K562 (cell line): ENCODE measurements at regions of chr2 and their contacts with region 1.

Region 1: GRCh38 chr2:170815746-170816503 is 762 bp upstream of the GAD1 start:
- DNase-seq: peak; percentile 85 to 88 (median 87)
- ATAC-seq: peak; percentile 87
- H3K4me3 ChIP-seq: peak overlapping the region; percentile 39
- H3K27ac ChIP-seq: no peak overlapping the region
- H3K4me1 ChIP-seq: peaks cover 6 to 48% of the 10 kb centered on the region in 2 experiments
- H3K27me3 ChIP-seq: peaks cover 0 to 7% of the 10 kb centered on the region in 2 experiments; a peak in 1 of 5 replicates
- CTCF ChIP-seq: peak; percentile 94 to 98 (median 95)
- EP300 ChIP-seq: no peak
- POLR2A ChIP-seq: no peak
- RAD21 ChIP-seq: peak; percentile 96

Region 2: GRCh38 chr2:169452080-169452479 is 1363.8 kb before region 1 on chr2:
- CTCF ChIA-PET with region 1: interaction called, 4 read pairs
- POLR2A ChIA-PET with region 1: no interaction called
- in situ Hi-C with region 1: no loop called
- intact Hi-C with region 1: loop called (anchors 2 kb)
- DNase-seq: peak; percentile 51 to 78 (median 58)
- ATAC-seq: peak; percentile 97
- H3K4me3 ChIP-seq: no peak overlapping the region
- H3K27ac ChIP-seq: no peak overlapping the region
- H3K4me1 ChIP-seq: no peaks in the 10 kb centered on the region; a peak in 1 of 5 replicates
- H3K27me3 ChIP-seq: no peaks in the 10 kb centered on the region
- CTCF ChIP-seq: peak; percentile 34 to 76 (median 49); a peak in 4 of 6 replicates
- EP300 ChIP-seq: no peak
- POLR2A ChIP-seq: no peak
- RAD21 ChIP-seq: peak; percentile 57 to 71

Region 3: DNA sequence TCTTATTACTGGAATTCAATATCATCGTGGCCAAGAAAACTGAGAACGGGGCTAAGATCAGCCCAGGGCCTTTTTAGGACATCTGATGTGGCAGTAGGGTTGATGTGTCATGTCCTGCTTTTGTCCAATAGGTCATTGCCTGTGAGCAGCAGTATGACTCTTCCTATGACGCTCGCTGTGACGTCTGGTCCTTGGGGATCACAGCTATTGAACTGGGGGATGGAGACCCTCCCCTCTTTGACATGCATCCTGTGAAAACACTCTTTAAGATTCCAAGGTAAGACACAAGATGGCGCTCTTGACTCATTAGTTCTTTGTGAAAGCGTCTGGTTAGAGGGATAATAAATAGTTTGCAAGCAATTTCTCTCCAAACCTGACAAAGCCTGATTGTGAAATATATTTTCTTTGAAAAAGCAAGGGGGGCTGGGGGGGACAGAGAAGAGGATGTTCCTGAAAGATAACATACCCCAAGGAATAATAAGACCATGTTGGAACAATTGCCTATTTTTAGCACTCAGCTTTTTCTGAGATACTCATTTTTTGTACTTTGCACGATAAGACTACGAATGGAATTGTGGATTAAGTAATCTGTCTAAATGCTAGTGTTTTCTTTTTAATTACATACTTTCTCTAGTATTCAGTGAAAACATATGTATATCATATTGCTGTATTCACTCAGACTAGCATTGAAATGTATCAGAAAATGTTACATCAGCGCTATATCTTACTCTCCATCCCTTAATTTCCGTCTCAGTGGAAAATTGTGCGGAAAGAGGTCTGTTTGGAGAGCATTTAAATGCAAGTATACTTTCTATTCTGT is 579.9 kb before region 1 on chr2:
- CTCF ChIA-PET with region 1: interaction called, 41 read pairs
- POLR2A ChIA-PET with region 1: interaction called, 3 read pairs
- in situ Hi-C with region 1: loop called (anchors 5 kb)
- intact Hi-C with region 1: loop called (anchors 1 kb)
- DNase-seq: peak; percentile 83 to 89 (median 84)
- ATAC-seq: peak; percentile 89
- H3K4me3 ChIP-seq: no peak overlapping the region
- H3K27ac ChIP-seq: no peak overlapping the region; the same call in 1 of the 3 replicates
- H3K4me1 ChIP-seq: peaks cover 0 to 57% of the 10 kb centered on the region in 2 experiments; a peak in 3 of 5 replicates
- H3K27me3 ChIP-seq: no peaks in the 10 kb centered on the region
- CTCF ChIP-seq: peak; percentile 69 to 92 (median 86)
- EP300 ChIP-seq: peak; percentile 94
- POLR2A ChIP-seq: no peak
- RAD21 ChIP-seq: peak; percentile 99

Region 4: GRCh38 chr2:170361090-170361936 is 454.6 kb before region 1 on chr2:
- CTCF ChIA-PET with region 1: interaction called, 17 read pairs
- POLR2A ChIA-PET with region 1: interaction called, 4 read pairs
- in situ Hi-C with region 1: loop called (anchors 10 kb)
- intact Hi-C with region 1: no loop called
- DNase-seq: peak; percentile 57 to 90 (median 64)
- ATAC-seq: peak; percentile 85
- H3K4me3 ChIP-seq: 0 out of 2 replicates have a peak overlapping the region, but pooled peaks have one; percentile 0
- H3K27ac ChIP-seq: peak overlapping the region; percentile 75
- H3K4me1 ChIP-seq: peaks cover 0 to 56% of the 10 kb centered on the region in 2 experiments; a peak in 4 of 5 replicates
- H3K27me3 ChIP-seq: no peaks in the 10 kb centered on the region
- CTCF ChIP-seq: peak; percentile 81 to 95 (median 89)
- EP300 ChIP-seq: no peak
- POLR2A ChIP-seq: no peak
- RAD21 ChIP-seq: peak; percentile 75 to 83

Region 5: GRCh38 chr2:170396799-170397459 is 419.0 kb before region 1 on chr2:
- CTCF ChIA-PET with region 1: interaction called, 23 read pairs
- POLR2A ChIA-PET with region 1: no interaction called
- in situ Hi-C with region 1: no loop called
- intact Hi-C with region 1: no loop called
- DNase-seq: peak in 2 of 4 experiments; percentile 37 to 39
- ATAC-seq: peak; percentile 77
- H3K4me3 ChIP-seq: no peak overlapping the region
- H3K27ac ChIP-seq: no peak overlapping the region
- H3K4me1 ChIP-seq: peaks cover 0 to 9% of the 10 kb centered on the region in 2 experiments; a peak in 1 of 5 replicates
- H3K27me3 ChIP-seq: no peaks in the 10 kb centered on the region
- CTCF ChIP-seq: peak; percentile 42 to 71 (median 48); a peak in 4 of 6 replicates
- EP300 ChIP-seq: no peak
- POLR2A ChIP-seq: no peak
- RAD21 ChIP-seq: peak; percentile 70 to 83

Region 6: DNA sequence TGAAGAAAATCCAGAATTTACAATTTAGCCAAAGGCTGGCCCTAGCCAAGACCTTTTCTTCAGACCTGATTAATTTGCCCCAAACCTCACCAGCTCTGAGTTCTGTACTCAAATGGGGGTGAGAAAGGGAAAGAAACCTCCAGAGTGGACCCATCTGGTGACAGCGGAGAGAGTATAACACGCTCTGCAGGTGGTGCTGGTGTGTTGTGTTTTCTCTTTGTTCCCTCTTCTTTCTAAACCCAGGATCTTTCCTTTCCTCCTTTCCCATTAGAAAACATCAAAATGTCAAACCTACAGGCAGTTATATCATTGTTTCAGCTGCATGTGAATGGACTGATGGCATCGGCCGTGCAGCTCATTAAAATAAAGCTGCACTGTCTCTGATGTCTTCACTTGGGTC is 354.0 kb before region 1 on chr2:
- CTCF ChIA-PET with region 1: interaction called, 10 read pairs
- POLR2A ChIA-PET with region 1: interaction called, 3 read pairs
- in situ Hi-C with region 1: no loop called
- intact Hi-C with region 1: loop called (anchors 2 kb)
- DNase-seq: no peak
- ATAC-seq: peak; percentile 63
- H3K4me3 ChIP-seq: no peak overlapping the region
- H3K27ac ChIP-seq: no peak overlapping the region
- H3K4me1 ChIP-seq: peaks cover 0 to 6% of the 10 kb centered on the region in 2 experiments; a peak in 2 of 5 replicates
- H3K27me3 ChIP-seq: no peaks in the 10 kb centered on the region
- CTCF ChIP-seq: peak in 2 of 3 experiments; percentile 17 to 38; a peak in 2 of 6 replicates
- EP300 ChIP-seq: no peak
- POLR2A ChIP-seq: no peak
- RAD21 ChIP-seq: peak in 1 of 2 experiments; percentile 58; a peak in 2 of 4 replicates

Region 7: DNA sequence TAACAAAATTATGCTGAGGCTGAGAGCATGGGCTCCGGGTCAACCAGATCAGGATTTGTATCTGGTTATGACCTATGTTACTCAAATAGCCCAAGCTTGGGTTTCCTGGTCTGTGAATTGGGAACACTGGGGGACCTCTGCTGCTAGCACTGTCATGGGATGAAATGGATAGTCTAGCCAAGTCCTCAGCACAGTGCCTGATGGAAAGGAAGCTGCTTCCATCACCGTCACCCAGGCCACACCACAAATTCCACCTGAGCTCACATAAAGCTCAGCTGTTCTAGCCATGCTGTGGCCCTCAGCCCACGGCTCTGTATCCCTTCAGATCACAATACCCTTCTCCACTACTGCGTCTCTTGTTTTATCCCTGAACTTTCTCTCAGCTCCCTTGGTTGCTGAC is 280.4 kb before region 1 on chr2:
- CTCF ChIA-PET with region 1: no interaction called
- POLR2A ChIA-PET with region 1: no interaction called
- in situ Hi-C with region 1: no loop called
- intact Hi-C with region 1: no loop called
- DNase-seq: no peak
- ATAC-seq: no peak
- H3K4me3 ChIP-seq: no peak overlapping the region
- H3K27ac ChIP-seq: no peak overlapping the region
- H3K4me1 ChIP-seq: no peaks in the 10 kb centered on the region; a peak in 1 of 5 replicates
- H3K27me3 ChIP-seq: peaks cover 4 to 5% of the 10 kb centered on the region in 2 experiments; a peak in 3 of 5 replicates
- CTCF ChIP-seq: no peak
- EP300 ChIP-seq: no peak
- POLR2A ChIP-seq: no peak
- RAD21 ChIP-seq: no peak

Region 8: DNA sequence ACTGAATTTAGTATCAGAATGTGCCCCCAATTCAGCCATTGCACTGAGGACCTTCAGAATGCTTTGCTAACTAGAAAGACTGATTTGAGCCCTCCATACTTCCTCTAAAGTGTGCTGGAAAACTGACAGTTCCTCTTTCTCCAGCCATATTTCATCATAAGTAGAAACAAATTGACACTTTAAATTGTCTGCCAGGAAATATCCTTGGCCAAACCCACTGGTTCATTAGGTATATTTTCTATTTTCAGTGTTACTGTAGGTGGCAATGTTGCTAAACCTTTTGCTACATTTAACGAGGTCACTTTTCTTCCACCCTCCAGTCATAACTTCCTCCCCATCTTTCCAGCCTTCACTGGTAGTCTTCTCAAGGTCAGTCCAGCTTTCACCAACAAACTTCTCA is 79.3 kb before region 1 on chr2:
- CTCF ChIA-PET with region 1: interaction called, 3 read pairs
- POLR2A ChIA-PET with region 1: no interaction called
- in situ Hi-C with region 1: no loop called
- intact Hi-C with region 1: loop called (anchors 1 kb)
- DNase-seq: peak in 1 of 4 experiments; percentile 27
- ATAC-seq: no peak
- H3K4me3 ChIP-seq: no peak overlapping the region
- H3K27ac ChIP-seq: no peak overlapping the region
- H3K4me1 ChIP-seq: peaks cover 6 to 19% of the 10 kb centered on the region in 2 experiments; a peak in 3 of 5 replicates
- H3K27me3 ChIP-seq: no peaks in the 10 kb centered on the region
- CTCF ChIP-seq: peak in 2 of 3 experiments; percentile 23 to 39; a peak in 3 of 6 replicates
- EP300 ChIP-seq: no peak
- POLR2A ChIP-seq: no peak
- RAD21 ChIP-seq: peak in 1 of 2 experiments; percentile 47; a peak in 2 of 4 replicates